Head of caudate nucleus (tissue), 42 donors: ENCODE measurements at regions of chr6 and their contacts with region 1.

Region 1: GRCh38 chr6:75934643-75935472 is 137.6 kb downstream of the IMPG1 start:
- DNase-seq: peak; percentile 25 to 86 (median 58)

Region 2: DNA sequence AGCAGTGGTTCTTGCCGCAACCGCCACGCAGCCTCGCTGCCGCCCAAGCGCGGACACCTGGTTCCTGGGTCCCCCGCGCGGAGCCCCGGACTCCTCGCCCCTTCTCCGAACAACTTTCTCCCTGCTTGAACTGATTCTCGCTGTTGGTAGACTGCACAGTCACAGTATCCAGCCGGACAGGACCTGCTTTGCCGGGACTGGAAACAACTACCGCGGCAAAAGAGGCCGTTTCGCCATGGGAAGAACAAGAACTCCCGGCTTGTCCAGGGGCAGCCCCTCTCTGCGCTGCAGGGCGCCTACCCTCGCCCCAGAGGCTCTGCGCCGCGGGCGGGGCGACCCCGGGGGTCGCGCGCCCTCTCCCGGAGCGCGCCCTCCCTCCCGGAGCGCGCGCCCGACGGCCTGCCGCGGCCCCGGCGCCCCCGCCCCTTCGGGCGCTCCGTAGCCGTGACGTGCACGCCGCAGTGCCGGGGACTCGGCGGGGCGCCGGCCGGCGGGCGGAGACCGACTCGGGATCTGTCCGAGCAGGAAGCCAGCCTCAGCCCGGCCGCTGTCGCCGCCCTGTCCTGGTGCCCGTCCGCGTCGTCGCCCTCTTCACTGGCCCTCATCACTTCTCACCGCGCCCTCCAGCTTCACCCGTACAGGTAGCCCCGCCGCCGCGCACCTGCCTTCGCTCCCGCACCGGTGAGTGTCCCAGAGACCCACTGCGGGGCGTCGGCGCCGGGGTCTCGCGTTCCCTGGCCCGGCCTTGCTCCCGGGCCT is 185.9 kb before region 1 on chr6 and contains the start of gene MYO6:
- intact Hi-C with region 1: no loop called
- DNase-seq: peak; percentile 38 to 92 (median 84)

Region 3: GRCh38 chr6:77457720-77458349 is 1523.0 kb after region 1 on chr6:
- intact Hi-C with region 1: loop called (anchors 10 kb)
- DNase-seq: peak in 38 of 42 donors; percentile 31 to 85 (median 68)